ENCODE measurements at regions of chr6 and their contacts with region 1.

Region 1: GRCh38 chr6:137094411-137095008 is 49.7 kb upstream of the IL20RA start:
- DNase-seq: peak; percentile 42 to 81 (median 54)
- H3K4me3 ChIP-seq: no peak overlapping the region
- H3K27ac ChIP-seq: no peak overlapping the region
- H3K4me1 ChIP-seq: no peaks in the 10 kb centered on the region
- H3K27me3 ChIP-seq: no peaks in the 10 kb centered on the region
- CTCF ChIP-seq: peak; percentile 59 to 88 (median 84)
- POLR2A ChIP-seq: no peak

Region 2: GRCh38 chr6:137313928-137314855 is 219.7 kb after region 1 on chr6:
- intact Hi-C with region 1: loop called (anchors 5 to 10 kb)
- DNase-seq: peak; percentile 52 to 85 (median 71)
- H3K4me3 ChIP-seq: no peak overlapping the region
- H3K27ac ChIP-seq: no peak overlapping the region
- H3K4me1 ChIP-seq: no peaks in the 10 kb centered on the region
- H3K27me3 ChIP-seq: no peaks in the 10 kb centered on the region
- CTCF ChIP-seq: peak; percentile 62 to 88 (median 77)
- POLR2A ChIP-seq: no peak

Region 3: DNA sequence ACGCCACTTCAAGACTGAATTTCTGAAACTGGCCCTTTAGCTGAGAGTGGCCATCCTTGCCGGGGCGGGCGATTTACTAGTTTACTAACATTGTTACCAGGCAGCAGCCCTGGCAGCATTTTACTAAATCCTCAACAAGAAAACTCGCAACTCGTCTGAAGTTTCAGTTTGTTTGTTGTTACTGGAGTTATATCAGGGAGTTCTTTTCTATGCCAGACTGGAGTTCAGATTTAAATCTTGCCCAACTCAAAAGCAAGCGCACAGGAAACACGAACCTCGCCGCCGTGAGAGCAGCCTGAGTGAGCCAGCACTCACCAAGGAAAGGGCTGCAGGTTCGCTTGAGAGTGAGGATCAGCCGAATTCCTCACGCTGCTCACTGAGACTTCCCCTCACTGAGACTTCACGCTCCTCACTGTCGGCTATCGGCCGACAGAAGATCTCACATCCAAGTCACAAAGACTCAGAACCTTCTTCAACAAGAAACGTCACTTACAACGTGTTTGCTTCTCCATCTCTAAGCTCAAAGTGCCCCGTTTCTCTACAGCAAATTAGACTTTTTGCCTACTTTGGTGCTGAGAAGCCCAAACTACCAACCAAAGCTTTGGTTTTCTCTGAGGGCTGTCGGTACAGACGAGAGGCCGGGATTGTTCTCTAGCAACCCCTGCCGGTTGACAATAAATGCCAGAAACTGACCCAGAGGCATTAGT is 320.8 kb after region 1 on chr6:
- intact Hi-C with region 1: loop called in 1 of 2 experiments (anchors 10 kb)
- DNase-seq: peak; percentile 49 to 77 (median 59)
- H3K4me3 ChIP-seq: peak overlapping the region in 2 of 4 donors; percentile 14 to 47
- H3K27ac ChIP-seq: no peak overlapping the region
- H3K4me1 ChIP-seq: peaks cover 0 to 6% of the 10 kb centered on the region in 2 donors
- H3K27me3 ChIP-seq: peaks cover 7% of the 10 kb centered on the region
- CTCF ChIP-seq: peak; percentile 48 to 66 (median 60)
- POLR2A ChIP-seq: no peak